ENCODE measurements at regions of chr6 and their contacts with region 1.

Region 1: GRCh38 chr6:109382576-109383437 is 540 bp upstream of the CD164 start:
- DNase-seq: peak; percentile 94
- ATAC-seq: peak; percentile 69
- H3K4me3 Mint-ChIP-seq: peak overlapping the region; percentile 84
- H3K27ac Mint-ChIP-seq: peak overlapping the region; percentile 100
- H3K4me1 Mint-ChIP-seq: peaks cover 31% of the 10 kb centered on the region
- H3K27me3 Mint-ChIP-seq: no peaks in the 10 kb centered on the region
- CTCF ChIP-seq: peak; percentile 87

Region 2: DNA sequence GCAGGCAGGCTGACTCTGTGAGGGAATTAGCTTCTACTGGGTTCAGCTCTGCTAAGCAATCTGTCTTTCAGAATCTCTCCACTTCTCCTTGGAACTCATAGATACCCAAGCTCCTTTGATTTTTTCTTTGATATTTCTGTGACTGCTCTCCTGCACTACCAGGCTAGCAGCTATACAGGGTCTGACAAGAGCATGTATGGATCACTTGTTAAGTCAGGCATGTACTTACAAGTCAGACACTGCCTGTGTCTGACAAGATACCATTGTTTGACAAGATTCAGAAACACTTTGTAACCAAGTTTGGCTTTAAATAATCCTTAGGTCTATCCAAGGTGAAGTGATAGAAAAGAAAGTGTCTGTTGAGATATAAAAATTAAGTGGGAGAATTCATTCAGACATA is 367.6 kb before region 1 on chr6:
- CTCF ChIA-PET with region 1: no interaction called
- POLR2A ChIA-PET with region 1: no interaction called
- intact Hi-C with region 1: loop called (anchors 5 kb)
- DNase-seq: no peak
- ATAC-seq: peak; percentile 26
- H3K4me3 Mint-ChIP-seq: no peak overlapping the region
- H3K27ac Mint-ChIP-seq: peak overlapping the region; percentile 32
- H3K4me1 Mint-ChIP-seq: peaks cover 50% of the 10 kb centered on the region
- H3K27me3 Mint-ChIP-seq: no peaks in the 10 kb centered on the region
- CTCF ChIP-seq: no peak

Region 3: DNA sequence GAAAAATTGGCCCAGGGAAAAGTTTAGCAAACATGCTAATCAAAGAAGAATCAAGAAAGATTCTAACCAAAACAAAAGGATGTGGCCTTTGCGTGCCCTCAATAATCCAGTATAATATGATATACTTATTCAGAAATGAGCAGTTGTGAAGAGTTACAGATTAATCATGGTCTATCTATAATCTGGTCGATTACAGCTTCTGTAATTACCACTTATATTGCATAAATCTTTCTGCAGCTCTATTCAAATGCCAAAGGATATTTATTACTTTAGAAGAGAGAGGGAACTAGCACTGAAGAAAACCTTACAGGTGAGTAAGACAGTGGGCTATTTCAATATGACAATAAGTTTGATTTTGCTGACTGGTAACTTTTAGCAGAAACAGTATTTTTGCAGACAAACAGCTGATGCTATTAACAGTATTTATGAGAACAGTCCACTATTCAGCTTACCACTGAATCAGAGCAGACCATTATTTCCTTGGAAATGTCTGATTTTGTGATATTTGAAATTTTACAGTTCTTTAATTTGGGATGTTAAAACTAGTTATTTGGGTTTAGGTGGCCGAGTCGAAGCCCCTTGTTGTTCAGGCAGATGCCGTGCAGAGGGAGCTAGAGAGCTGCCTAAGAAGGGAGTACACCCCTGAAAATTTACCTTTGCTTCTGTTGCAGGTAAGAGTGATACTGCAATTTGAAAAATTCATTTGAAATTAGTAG is 195.2 kb before region 1 on chr6:
- CTCF ChIA-PET with region 1: interaction called, 111 read pairs
- POLR2A ChIA-PET with region 1: interaction called, 18 read pairs
- intact Hi-C with region 1: loop called (anchors 2 kb)
- DNase-seq: peak; percentile 75
- ATAC-seq: peak; percentile 86
- H3K4me3 Mint-ChIP-seq: no peak overlapping the region
- H3K27ac Mint-ChIP-seq: no peak overlapping the region
- H3K4me1 Mint-ChIP-seq: no peaks in the 10 kb centered on the region
- H3K27me3 Mint-ChIP-seq: peaks cover 3% of the 10 kb centered on the region
- CTCF ChIP-seq: peak; percentile 86

Region 4: GRCh38 chr6:109327491-109327890 is 55.3 kb before region 1 on chr6:
- CTCF ChIA-PET with region 1: no interaction called
- POLR2A ChIA-PET with region 1: no interaction called
- intact Hi-C with region 1: no loop called
- DNase-seq: no peak
- ATAC-seq: no peak
- H3K4me3 Mint-ChIP-seq: no peak overlapping the region
- H3K27ac Mint-ChIP-seq: no peak overlapping the region
- H3K4me1 Mint-ChIP-seq: peaks cover 9% of the 10 kb centered on the region
- H3K27me3 Mint-ChIP-seq: no peaks in the 10 kb centered on the region
- CTCF ChIP-seq: no peak

Region 5: GRCh38 chr6:109397020-109397419 is 14.2 kb after region 1 on chr6:
- CTCF ChIA-PET with region 1: interaction called, 16 read pairs
- POLR2A ChIA-PET with region 1: interaction called, 6 read pairs
- intact Hi-C with region 1: no loop called
- DNase-seq: no peak
- ATAC-seq: no peak
- H3K4me3 Mint-ChIP-seq: no peak overlapping the region
- H3K27ac Mint-ChIP-seq: no peak overlapping the region
- H3K4me1 Mint-ChIP-seq: peaks cover 4% of the 10 kb centered on the region
- H3K27me3 Mint-ChIP-seq: no peaks in the 10 kb centered on the region
- CTCF ChIP-seq: peak; percentile 15

Region 6: GRCh38 chr6:109455502-109456282 is 72.9 kb after region 1 on chr6 and contains the start of gene MICAL1:
- CTCF ChIA-PET with region 1: interaction called, 11 read pairs
- POLR2A ChIA-PET with region 1: interaction called, 39 read pairs
- intact Hi-C with region 1: loop called (anchors 2 kb)
- DNase-seq: peak; percentile 79
- ATAC-seq: peak; percentile 54
- H3K4me3 Mint-ChIP-seq: peak within 1 kb of the TSS; percentile 90
- H3K27ac Mint-ChIP-seq: peak within 1 kb of the TSS; percentile 97
- H3K4me1 Mint-ChIP-seq: peaks cover 70% of the 10 kb centered on the region
- H3K27me3 Mint-ChIP-seq: no peaks in the 10 kb centered on the region
- CTCF ChIP-seq: peak; percentile 16
- total RNA-seq, gene MICAL1: 17.7 TPM